Testis (tissue), 5 donors: ENCODE measurements at regions of chr4 and their contacts with region 1.

Region 1: DNA sequence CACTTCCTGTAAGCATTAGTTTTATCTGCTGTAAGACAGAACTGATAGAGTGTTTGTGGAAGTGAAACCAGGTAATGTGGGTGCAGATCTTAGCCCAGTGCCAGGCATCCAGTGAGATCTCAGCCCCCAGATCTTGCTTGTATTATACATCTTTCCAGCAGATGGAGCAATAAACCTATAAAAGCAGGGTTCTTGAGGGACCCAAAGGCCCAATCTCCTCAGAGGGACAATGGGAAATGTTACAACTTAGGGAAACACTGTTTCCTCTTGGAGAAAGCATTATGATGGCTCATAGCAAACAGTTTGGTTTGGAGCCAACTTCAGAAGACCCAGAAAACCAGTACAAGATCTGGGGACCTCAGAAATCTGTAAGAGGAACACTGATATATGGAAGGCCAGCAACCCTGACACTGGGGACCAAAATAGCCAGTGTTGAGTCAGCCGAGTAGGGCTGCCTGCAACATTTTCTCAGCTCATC is 206.3 kb downstream of the SLC7A11 start:
- DNase-seq: peak; percentile 22
- H3K4me3 ChIP-seq: no peak overlapping the region
- H3K27ac ChIP-seq: no peak overlapping the region
- H3K4me1 ChIP-seq: no peaks in the 10 kb centered on the region
- H3K27me3 ChIP-seq: no peaks in the 10 kb centered on the region
- CTCF ChIP-seq: peak; percentile 46 to 57 (median 49)
- POLR2A ChIP-seq: no peak

Region 2: DNA sequence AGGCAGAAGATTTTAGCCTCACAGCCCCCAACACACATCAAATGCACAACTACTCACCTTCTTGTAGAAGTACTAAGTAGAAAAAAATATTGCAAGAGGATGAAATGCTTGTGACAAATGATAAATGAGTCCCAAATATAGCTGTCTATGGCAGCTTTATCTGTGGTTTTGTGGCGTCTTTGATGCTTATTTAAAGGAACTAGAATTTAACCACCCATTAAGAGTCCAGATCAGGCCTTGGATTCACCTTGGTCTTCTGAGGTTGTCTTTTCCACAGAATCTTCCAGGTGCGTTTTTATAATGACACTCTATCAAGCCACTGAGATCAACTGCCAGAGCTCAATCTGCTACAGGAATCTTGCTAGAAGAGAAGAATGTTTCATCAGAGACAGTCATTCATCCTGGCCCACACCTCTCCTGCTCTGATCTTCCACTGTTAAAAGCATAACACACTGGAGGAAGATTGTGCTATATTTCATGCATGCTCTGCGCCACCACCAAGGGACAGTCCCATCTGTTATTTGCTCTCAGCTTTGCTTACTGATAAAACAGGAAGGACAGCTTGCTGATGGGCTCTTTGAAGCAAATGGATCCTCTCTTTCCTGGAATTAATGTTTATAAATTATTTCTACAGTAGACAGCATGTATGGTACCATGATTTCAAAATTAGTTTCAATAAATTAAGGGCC is 62.2 kb after region 1 on chr4:
- intact Hi-C with region 1: no loop called
- DNase-seq: no peak
- H3K4me3 ChIP-seq: no peak overlapping the region
- H3K27ac ChIP-seq: no peak overlapping the region
- H3K4me1 ChIP-seq: no peaks in the 10 kb centered on the region
- H3K27me3 ChIP-seq: no peaks in the 10 kb centered on the region
- CTCF ChIP-seq: no peak
- POLR2A ChIP-seq: no peak

Region 3: DNA sequence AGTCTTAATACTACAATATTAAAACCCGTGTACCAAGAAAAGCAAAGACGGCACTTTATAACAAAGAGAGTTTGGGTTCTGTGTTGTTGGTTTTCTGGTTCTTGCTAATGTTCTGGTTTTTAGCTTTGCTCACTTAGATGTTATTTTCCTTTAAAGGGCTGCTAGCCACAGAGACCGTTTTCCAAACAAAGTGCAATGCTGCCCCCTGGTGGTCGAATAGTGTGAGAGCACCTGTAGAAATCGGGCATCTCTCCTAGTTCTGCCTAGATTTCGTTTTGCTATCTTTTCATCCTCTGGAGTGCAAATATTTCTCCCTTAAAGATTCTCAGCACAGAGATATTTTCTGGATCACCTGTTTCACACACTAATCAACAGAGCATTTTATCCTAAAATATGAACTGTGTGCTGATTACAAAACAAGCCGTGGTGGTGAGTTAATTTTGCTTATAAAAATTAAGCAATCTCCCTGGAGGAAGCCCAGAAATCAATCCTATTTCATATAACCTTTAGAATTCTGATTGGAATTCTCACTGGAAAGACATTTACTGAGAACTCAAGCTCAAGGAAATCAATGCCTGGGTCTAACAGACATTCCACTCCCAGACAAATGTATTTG is 645.3 kb after region 1 on chr4:
- intact Hi-C with region 1: loop called (anchors 10 kb)
- DNase-seq: peak; percentile 91
- H3K4me3 ChIP-seq: no peak overlapping the region
- H3K27ac ChIP-seq: no peak overlapping the region
- H3K4me1 ChIP-seq: no peaks in the 10 kb centered on the region
- H3K27me3 ChIP-seq: no peaks in the 10 kb centered on the region
- CTCF ChIP-seq: peak; percentile 98 to 100 (median 99)
- POLR2A ChIP-seq: no peak